PC-3 (cell line): ENCODE measurements at regions of chrX and their contacts with region 1.

Region 1: DNA sequence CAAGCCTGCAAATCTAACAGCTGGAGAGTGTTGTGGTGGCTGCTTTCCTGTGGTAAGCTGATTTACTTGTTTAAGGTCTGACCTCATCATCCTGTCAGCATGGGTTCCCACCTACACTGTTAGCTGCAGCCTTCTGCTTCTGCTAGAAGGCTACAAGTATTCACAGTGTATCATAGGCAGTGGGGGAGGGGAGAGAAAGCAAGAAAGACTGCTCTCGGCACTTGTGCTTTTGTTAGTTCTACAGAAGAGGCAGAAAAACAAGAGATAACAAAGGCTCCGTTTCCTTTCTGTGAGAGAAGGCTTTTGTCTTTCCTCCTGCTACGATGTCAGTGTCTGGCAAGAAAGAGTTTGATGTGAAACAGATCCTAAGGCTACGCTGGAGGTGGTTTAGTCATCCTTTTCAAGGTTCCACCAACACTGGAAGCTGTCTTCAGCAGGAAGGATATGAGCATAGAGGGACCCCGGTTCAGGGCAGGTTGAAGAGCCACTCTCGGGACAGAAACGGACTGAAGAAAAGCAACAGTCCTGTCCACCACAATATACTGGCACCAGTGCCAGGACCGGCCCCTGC is at the start of gene KLHL4:
- DNase-seq: peak; percentile 70
- ATAC-seq: peak; percentile 85
- H3K4me3 ChIP-seq: peak within 1 kb of the TSS; percentile 68
- H3K27ac ChIP-seq: peak within 1 kb of the TSS; percentile 83
- H3K4me1 ChIP-seq: peaks cover 17% of the 10 kb centered on the region
- H3K27me3 ChIP-seq: no peaks in the 10 kb centered on the region
- CTCF ChIP-seq: no peak
- total RNA-seq, gene KLHL4: 1.0 and 1.1 TPM in 2 replicates

Region 2: GRCh38 chrX:87338510-87338909 is 179.1 kb before region 1 on chrX:
- CTCF ChIA-PET with region 1: no interaction called
- POLR2A ChIA-PET with region 1: no interaction called
- intact Hi-C with region 1: loop called (anchors 2 kb)
- DNase-seq: peak; percentile 47
- ATAC-seq: peak; percentile 33; the same call in 1 of the 2 replicates
- H3K4me3 ChIP-seq: no peak overlapping the region
- H3K27ac ChIP-seq: no peak overlapping the region
- H3K4me1 ChIP-seq: no peaks in the 10 kb centered on the region
- H3K27me3 ChIP-seq: no peaks in the 10 kb centered on the region
- CTCF ChIP-seq: peak; percentile 53; the same call in 1 of the 2 replicates

Region 3: DNA sequence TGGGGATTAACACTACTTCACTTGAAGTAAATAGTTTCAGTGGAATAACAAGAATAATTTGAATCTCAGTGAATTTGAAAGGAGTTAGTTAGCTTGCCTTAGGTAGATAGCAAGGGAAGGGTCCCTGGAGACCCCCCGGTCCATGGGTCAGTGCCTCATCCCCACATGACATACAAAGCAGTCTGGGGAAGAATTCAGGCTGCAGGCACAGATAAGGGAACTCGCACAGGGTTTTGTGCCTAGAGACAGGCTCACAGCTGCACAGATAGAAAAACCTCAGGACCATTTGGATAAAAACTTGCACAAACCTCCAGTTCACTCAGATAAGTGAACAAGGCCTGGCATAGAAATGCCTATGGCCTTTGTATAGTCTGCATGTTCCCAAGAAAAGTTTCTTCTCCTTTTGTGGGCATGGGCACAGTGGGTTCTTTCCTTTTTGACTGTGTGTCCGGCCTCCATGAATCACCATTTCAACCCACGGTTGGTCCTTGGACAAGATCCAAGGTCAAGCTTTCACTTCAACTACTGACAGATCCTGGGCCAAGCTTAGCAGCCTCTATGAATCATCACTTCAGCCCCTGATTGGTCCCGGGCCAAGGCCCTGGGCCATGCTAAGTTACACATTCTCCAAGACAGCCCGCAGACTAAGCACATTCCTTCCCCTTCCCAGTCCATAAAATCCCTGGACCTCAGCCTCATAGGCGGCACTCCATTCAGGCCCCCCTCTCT is 108.4 kb before region 1 on chrX:
- CTCF ChIA-PET with region 1: no interaction called
- POLR2A ChIA-PET with region 1: no interaction called
- intact Hi-C with region 1: loop called (anchors 5 kb)
- DNase-seq: peak; percentile 87
- ATAC-seq: peak; percentile 93
- H3K4me3 ChIP-seq: no peak overlapping the region
- H3K27ac ChIP-seq: peak overlapping the region; percentile 44; the same call in 1 of the 2 replicates
- H3K4me1 ChIP-seq: peaks cover 10% of the 10 kb centered on the region
- H3K27me3 ChIP-seq: no peaks in the 10 kb centered on the region
- CTCF ChIP-seq: no peak

Region 4: DNA sequence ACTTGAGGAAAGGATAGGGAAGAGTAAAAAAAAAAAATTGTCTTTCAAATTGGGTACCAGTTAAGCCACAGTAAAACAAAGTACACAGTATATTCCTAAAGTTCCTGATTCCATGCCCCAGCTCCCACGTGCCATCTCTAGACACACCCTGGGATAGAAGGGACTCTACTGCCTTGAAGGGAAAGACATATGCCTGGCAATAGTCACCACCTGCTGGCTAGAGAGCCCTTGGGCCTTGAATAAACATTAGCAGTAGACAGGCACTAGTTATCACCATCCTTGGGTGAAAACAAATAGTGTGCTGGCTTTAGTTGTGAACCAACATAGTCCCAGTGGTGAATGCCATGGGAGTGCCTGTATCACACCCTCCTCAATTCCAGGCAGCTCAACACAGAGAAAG is 44.9 kb after region 1 on chrX:
- CTCF ChIA-PET with region 1: no interaction called
- POLR2A ChIA-PET with region 1: no interaction called
- intact Hi-C with region 1: loop called (anchors 1 kb)
- DNase-seq: peak; percentile 1
- ATAC-seq: peak; percentile 43; the same call in 1 of the 2 replicates
- H3K4me3 ChIP-seq: no peak overlapping the region
- H3K27ac ChIP-seq: no peak overlapping the region
- H3K4me1 ChIP-seq: no peaks in the 10 kb centered on the region
- H3K27me3 ChIP-seq: no peaks in the 10 kb centered on the region
- CTCF ChIP-seq: no peak

Region 5: GRCh38 chrX:87572911-87573310 is 55.3 kb after region 1 on chrX:
- CTCF ChIA-PET with region 1: no interaction called
- POLR2A ChIA-PET with region 1: no interaction called
- intact Hi-C with region 1: loop called (anchors 1 kb)
- DNase-seq: peak; percentile 20
- ATAC-seq: no peak
- H3K4me3 ChIP-seq: no peak overlapping the region
- H3K27ac ChIP-seq: no peak overlapping the region
- H3K4me1 ChIP-seq: no peaks in the 10 kb centered on the region
- H3K27me3 ChIP-seq: no peaks in the 10 kb centered on the region
- CTCF ChIP-seq: no peak

Region 6: DNA sequence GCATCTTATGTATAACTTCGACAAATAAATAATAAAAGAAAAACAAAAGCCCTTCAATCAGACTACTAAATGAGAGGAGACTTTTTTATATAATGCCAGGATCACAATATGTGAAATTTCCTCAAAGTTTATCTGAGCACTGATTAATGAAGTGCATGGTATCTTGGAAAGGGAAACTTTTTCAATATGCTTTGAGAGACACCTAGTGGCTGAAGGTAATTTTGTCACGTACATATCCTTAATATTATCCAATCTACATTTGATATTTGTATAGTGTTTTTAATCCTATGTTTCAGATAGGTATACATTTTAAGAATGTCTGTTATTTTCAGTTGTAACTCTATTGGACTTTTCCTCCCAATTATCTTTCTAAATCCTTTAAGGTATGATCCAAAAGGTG is 146.7 kb after region 1 on chrX:
- CTCF ChIA-PET with region 1: no interaction called
- POLR2A ChIA-PET with region 1: no interaction called
- intact Hi-C with region 1: loop called (anchors 5 kb)
- DNase-seq: peak; percentile 57
- ATAC-seq: peak; percentile 65
- H3K4me3 ChIP-seq: no peak overlapping the region
- H3K27ac ChIP-seq: no peak overlapping the region
- H3K4me1 ChIP-seq: no peaks in the 10 kb centered on the region
- H3K27me3 ChIP-seq: no peaks in the 10 kb centered on the region
- CTCF ChIP-seq: peak; percentile 66